ENCODE measurements at regions of chr18 and their contacts with region 1.

Region 1: DNA sequence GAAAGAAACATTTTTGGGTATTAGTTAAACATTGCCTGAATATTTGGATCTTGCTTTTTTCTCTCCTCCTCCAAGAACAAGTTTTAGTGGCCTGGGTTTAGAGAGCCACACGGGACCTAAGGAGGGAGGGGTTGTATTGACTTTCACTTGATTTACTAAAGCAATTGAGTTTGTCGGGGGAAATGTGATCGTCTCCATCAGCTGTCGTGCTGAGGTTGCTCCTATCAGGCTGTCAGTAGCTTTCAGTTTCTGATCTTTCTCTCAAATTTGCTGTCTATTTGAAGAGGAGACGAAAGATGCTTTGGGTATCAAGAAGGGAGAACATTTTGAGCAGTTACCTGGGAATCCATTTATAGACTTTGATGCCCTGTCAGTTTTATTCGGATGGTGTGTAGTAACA is 106.0 kb downstream of the SETBP1 start:
- DNase-seq: no peak
- H3K4me3 ChIP-seq: no peak overlapping the region
- H3K27ac ChIP-seq: no peak overlapping the region
- H3K4me1 ChIP-seq: no peaks in the 10 kb centered on the region
- H3K27me3 ChIP-seq: no peaks in the 10 kb centered on the region
- CTCF ChIP-seq: no peak
- POLR2A ChIP-seq: no peak

Region 2: DNA sequence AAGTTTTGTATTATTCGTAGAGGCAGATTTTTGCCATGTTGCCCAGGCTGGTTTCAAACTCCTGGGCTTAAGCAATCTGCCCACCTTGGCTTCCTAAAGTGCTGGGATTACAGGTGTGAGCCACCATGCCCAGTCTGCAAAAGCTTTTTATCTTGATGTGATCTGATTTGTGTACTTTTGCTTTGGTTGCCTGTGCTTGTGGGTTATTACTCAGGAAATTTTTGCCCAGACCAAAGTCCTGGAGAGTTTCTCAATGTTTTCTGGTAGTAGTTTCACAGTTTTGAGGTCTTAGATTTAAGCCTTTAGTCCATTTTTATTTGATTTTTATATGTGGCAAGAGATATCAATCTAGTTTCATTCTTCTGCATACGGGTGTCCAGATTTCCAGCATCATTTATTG is 1551.8 kb before region 1 on chr18:
- CTCF ChIA-PET with region 1: no interaction called
- POLR2A ChIA-PET with region 1: no interaction called
- dilution Hi-C with region 1: no loop called
- intact Hi-C with region 1: no loop called
- DNase-seq: no peak
- H3K4me3 ChIP-seq: no peak overlapping the region
- H3K27ac ChIP-seq: no peak overlapping the region
- H3K4me1 ChIP-seq: no peaks in the 10 kb centered on the region
- H3K27me3 ChIP-seq: no peaks in the 10 kb centered on the region
- CTCF ChIP-seq: no peak
- POLR2A ChIP-seq: no peak

Region 3: GRCh38 chr18:44700652-44701051 is 86.0 kb before region 1 on chr18:
- CTCF ChIA-PET with region 1: no interaction called
- POLR2A ChIA-PET with region 1: no interaction called
- dilution Hi-C with region 1: no loop called
- intact Hi-C with region 1: no loop called
- DNase-seq: no peak
- H3K4me3 ChIP-seq: no peak overlapping the region
- H3K27ac ChIP-seq: no peak overlapping the region
- H3K4me1 ChIP-seq: no peaks in the 10 kb centered on the region
- H3K27me3 ChIP-seq: no peaks in the 10 kb centered on the region
- CTCF ChIP-seq: no peak
- POLR2A ChIP-seq: no peak

Region 4: GRCh38 chr18:44736664-44737380 is 49.9 kb before region 1 on chr18:
- CTCF ChIA-PET with region 1: no interaction called
- POLR2A ChIA-PET with region 1: no interaction called
- dilution Hi-C with region 1: no loop called
- intact Hi-C with region 1: loop called (anchors 5 kb)
- DNase-seq: no peak
- H3K4me3 ChIP-seq: no peak overlapping the region
- H3K27ac ChIP-seq: no peak overlapping the region
- H3K4me1 ChIP-seq: no peaks in the 10 kb centered on the region
- H3K27me3 ChIP-seq: no peaks in the 10 kb centered on the region
- CTCF ChIP-seq: no peak
- POLR2A ChIP-seq: no peak

Measured in endothelial cell of umbilical vein (primary cell).